Ovary (tissue), 10 donors: ENCODE measurements at regions of chr2 and their contacts with region 1.

Region 1: GRCh38 chr2:64453770-64454385 is at the start of gene LGALSL:
- DNase-seq: peak; percentile 76 to 83 (median 79)
- H3K4me3 ChIP-seq: peak within 1 kb of the TSS; percentile 91
- H3K27ac ChIP-seq: peak within 1 kb of the TSS; percentile 97 to 99
- H3K4me1 ChIP-seq: peaks cover 4% of the 10 kb centered on the region
- H3K27me3 ChIP-seq: no peaks in the 10 kb centered on the region
- CTCF ChIP-seq: peak in 1 of 3 donors; percentile 7
- EP300 ChIP-seq: no peak
- POLR2A ChIP-seq: peak; percentile 66
- total RNA-seq, gene LGALSL: 10.5 to 22.0 (median 15.5) TPM

Region 2: DNA sequence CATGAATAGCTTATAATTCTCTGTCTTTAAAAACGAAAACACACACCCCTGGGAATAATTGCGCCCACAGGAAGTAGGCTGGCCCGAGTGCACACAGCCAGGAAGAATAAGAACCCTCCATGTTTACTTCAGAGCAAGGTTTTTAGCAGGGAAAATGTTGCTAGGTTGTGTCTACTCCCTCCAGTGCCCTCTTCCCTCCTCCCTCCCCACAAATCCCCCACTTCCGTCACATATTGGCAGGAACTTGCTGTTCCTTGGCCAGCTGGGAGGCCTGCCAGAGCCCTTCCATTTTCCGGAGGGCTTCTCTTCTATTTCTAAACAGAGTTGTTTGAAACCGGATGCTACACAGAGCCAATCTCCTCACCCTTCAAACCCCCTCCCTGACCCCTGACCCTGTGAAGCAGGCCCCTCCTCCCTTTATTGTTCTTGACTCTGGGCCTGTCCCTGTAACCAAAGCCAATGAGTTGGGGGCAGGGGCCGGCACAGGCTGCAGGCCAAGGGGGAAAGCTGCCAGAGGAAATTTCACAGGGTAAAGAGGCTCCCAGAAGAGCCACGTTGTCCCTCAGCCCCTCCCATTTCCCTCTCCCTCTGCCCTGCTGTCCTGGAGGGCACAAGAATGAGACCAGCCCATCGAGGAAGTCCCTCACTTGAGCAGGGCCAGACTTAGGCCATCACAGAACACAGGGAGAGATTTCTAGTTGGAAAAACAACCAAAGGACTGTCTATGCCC is 49.7 kb before region 1 on chr2:
- intact Hi-C with region 1: loop called in 2 of 4 experiments (anchors 10 kb)
- DNase-seq: peak; percentile 88 to 95 (median 93)
- H3K4me3 ChIP-seq: no peak overlapping the region
- H3K27ac ChIP-seq: peak overlapping the region; percentile 35 to 80
- H3K4me1 ChIP-seq: peaks cover 24% of the 10 kb centered on the region
- H3K27me3 ChIP-seq: no peaks in the 10 kb centered on the region
- CTCF ChIP-seq: no peak
- EP300 ChIP-seq: no peak
- POLR2A ChIP-seq: no peak